HepG2 (cell line): ENCODE measurements at regions of chr6 and their contacts with region 1.

Region 1: DNA sequence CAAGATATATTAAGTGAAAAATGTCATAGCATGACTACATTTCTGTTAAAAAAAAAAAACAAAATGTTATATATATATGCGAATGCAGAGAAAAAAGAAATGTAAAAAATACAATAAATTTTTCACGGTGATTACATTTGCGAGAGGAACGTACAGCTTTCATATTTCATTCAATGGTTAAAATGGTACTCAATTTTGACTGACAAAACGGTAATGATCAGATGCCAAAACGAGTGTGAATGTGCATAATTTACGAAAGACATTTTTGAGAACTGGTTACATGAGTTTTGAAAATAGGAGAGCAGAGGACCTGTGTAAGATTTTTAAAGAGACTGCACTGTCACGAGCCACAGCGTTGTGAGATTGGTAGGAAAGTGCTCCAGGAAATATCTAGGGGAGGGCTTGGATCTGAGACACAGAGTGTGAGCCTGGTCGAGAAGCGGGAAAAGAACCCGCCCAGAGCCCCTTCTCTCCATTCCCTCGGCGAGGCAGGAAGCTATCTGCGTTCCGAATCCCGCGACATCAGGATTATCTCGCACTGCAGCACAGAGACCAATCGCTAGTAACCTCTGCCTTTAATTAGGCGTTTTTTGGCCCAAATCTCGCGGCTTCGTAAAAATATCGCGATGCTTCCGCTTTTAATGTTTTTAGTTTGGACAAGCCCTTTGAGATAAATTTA is 28.5 kb downstream of the TRIM27 start:
- DNase-seq: peak; percentile 98
- ATAC-seq: peak; percentile 86
- H3K4me3 ChIP-seq: peak overlapping the region; percentile 82 to 97 (median 86)
- H3K27ac ChIP-seq: peak overlapping the region; percentile 93
- H3K4me1 ChIP-seq: peaks cover 40% of the 10 kb centered on the region
- H3K27me3 ChIP-seq: no peaks in the 10 kb centered on the region; a peak in 1 of 5 replicates
- CTCF ChIP-seq: no peak
- EP300 ChIP-seq: no peak
- POLR2A ChIP-seq: peak; percentile 90 to 95
- RAD21 ChIP-seq: no peak

Region 2: GRCh38 chr6:28880894-28881780 is 14.1 kb before region 1 on chr6:
- CTCF ChIA-PET with region 1: no interaction called
- POLR2A ChIA-PET with region 1: interaction called, 43 read pairs
- in situ Hi-C with region 1: no loop called
- intact Hi-C with region 1: loop called (anchors 1 kb)
- DNase-seq: peak; percentile 82
- ATAC-seq: peak; percentile 27
- H3K4me3 ChIP-seq: peak overlapping the region; percentile 38 to 63 (median 59)
- H3K27ac ChIP-seq: no peak overlapping the region
- H3K4me1 ChIP-seq: peaks cover 62% of the 10 kb centered on the region
- H3K27me3 ChIP-seq: no peaks in the 10 kb centered on the region
- CTCF ChIP-seq: no peak
- EP300 ChIP-seq: no peak
- POLR2A ChIP-seq: no peak
- RAD21 ChIP-seq: no peak